CD8-positive, alpha-beta T cell (primary cell): ENCODE measurements at regions of chr17 and their contacts with region 1.

Region 1: DNA sequence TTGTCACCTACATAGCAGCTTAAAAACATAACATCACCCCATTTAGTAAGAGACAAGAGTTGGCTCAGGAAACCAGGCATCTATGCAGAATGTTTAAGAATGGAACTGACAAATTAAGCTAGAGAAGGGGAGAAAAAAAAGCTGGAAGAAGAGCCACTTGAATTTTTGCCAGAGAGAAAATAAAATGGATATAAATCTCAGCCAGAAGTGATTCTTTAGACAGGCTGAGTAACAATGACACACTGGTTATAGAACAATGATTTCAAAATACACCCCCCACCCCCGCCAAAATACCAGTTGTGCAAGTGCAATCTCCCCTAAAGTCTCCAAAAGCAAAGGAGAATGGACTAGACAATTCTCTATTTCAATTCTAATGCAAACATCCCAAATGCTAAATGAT is 22.4 kb downstream of the LSM12 start:
- DNase-seq: no peak
- ATAC-seq: no peak
- H3K4me3 ChIP-seq: no peak overlapping the region
- H3K4me3 Mint-ChIP-seq: no peak overlapping the region
- H3K27ac ChIP-seq: no peak overlapping the region
- H3K27ac Mint-ChIP-seq: peak overlapping the region; percentile 30
- H3K4me1 ChIP-seq: no peaks in the 10 kb centered on the region
- H3K4me1 Mint-ChIP-seq: peaks cover 26% of the 10 kb centered on the region
- H3K27me3 ChIP-seq: no peaks in the 10 kb centered on the region
- H3K27me3 Mint-ChIP-seq: no peaks in the 10 kb centered on the region
- CTCF ChIP-seq: no peak

Region 2: DNA sequence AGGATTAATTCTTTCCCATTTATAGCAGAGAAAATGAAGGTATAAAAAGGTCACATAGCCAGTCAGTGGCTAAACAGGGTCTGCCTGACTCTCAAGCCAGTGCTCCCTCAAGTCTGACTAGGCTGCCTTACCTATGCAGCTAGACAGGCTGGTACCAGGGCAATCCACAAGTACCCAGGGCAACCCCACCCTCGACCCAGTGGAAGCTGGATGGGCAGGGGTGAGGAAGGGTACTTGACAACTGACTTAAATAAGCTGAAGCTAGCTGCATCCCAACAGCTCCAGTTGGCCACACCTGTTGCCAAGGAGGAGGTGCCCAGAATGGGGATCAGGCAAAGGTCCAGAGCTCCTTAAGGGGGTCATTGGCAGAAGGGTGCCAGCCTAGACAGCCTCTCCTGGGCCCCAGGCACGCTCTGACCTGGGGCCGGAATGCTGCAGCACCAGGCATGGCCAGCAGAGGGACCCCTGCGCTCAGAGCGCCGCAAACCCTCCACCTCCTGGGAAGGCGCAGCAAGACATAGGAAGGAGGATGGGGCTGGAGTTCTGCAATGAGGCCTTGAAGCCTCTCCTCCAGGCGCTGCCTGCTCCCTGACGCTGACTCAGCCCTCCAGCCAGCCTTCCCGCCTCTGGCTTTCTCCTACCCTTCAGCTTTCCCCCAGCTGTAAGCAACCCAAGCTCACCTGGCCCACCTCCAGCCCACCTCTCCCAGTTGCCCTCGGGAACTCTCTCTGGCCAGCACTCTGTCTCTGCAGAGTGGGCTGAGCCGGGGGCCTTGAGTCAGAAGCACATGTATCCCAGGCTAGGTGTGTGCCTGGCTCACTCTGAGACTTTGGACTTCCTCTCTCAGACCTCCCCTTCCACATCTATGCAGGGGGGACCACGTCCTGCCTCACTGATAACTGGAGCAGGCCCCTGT is 165.5 kb before region 1 on chr17:
- CTCF ChIA-PET with region 1: interaction called, 51 read pairs
- POLR2A ChIA-PET with region 1: no interaction called
- intact Hi-C with region 1: loop called in 1 of 2 experiments (anchors 1 kb)
- DNase-seq: peak; percentile 32 to 79 (median 69)
- ATAC-seq: peak; percentile 88
- H3K4me3 ChIP-seq: no peak overlapping the region
- H3K4me3 Mint-ChIP-seq: no peak overlapping the region
- H3K27ac ChIP-seq: no peak overlapping the region
- H3K27ac Mint-ChIP-seq: no peak overlapping the region
- H3K4me1 ChIP-seq: no peaks in the 10 kb centered on the region
- H3K4me1 Mint-ChIP-seq: peaks cover 2% of the 10 kb centered on the region
- H3K27me3 ChIP-seq: no peaks in the 10 kb centered on the region
- H3K27me3 Mint-ChIP-seq: no peaks in the 10 kb centered on the region
- CTCF ChIP-seq: peak; percentile 91

Region 3: GRCh38 chr17:43940630-43941029 is 103.4 kb before region 1 on chr17:
- CTCF ChIA-PET with region 1: interaction called, 67 read pairs
- POLR2A ChIA-PET with region 1: interaction called, 5 read pairs
- intact Hi-C with region 1: loop called in 1 of 2 experiments (anchors 1 kb)
- DNase-seq: peak in 2 of 9 experiments; percentile 24 to 32
- ATAC-seq: no peak
- H3K4me3 ChIP-seq: no peak overlapping the region
- H3K4me3 Mint-ChIP-seq: no peak overlapping the region
- H3K27ac ChIP-seq: no peak overlapping the region
- H3K27ac Mint-ChIP-seq: no peak overlapping the region
- H3K4me1 ChIP-seq: peaks cover 12% of the 10 kb centered on the region
- H3K4me1 Mint-ChIP-seq: peaks cover 14% of the 10 kb centered on the region
- H3K27me3 ChIP-seq: no peaks in the 10 kb centered on the region
- H3K27me3 Mint-ChIP-seq: peaks cover 4% of the 10 kb centered on the region
- CTCF ChIP-seq: no peak

Region 4: DNA sequence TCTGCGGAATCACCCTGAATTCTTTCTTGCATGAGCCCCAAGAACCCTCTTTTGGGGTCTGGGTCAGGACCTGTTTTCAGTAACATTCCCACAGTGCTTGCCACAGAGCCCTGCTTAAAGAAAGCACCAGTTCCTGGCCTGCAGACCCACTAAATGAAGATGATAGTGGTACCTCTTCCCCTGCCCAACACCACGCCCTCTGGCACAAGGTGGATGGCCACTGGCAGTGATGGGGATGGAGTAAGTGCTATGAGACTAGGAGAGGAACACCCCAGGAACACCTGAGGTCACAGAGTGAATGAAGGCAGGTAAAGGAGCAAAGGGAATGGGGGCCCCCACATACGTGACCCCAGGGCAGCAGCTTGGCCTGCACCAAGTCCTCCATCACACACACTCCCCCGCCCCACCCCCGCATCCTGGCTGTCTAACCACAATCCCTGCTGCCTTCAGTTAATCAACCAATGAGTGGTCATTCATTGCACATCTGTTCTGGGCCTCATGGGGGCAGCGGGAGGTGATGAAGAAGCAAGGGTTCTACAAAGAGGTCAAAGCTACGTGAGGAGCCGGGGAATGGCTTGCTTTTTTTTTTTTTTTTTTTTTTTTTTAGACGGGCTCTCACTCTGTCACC is 97.9 kb before region 1 on chr17:
- CTCF ChIA-PET with region 1: interaction called, 67 read pairs
- POLR2A ChIA-PET with region 1: interaction called, 5 read pairs
- intact Hi-C with region 1: loop called in 1 of 2 experiments (anchors 1 kb)
- DNase-seq: no peak
- ATAC-seq: no peak
- H3K4me3 ChIP-seq: no peak overlapping the region
- H3K4me3 Mint-ChIP-seq: no peak overlapping the region
- H3K27ac ChIP-seq: no peak overlapping the region
- H3K27ac Mint-ChIP-seq: no peak overlapping the region
- H3K4me1 ChIP-seq: no peaks in the 10 kb centered on the region
- H3K4me1 Mint-ChIP-seq: no peaks in the 10 kb centered on the region
- H3K27me3 ChIP-seq: peaks cover 0 to under 1% of the 10 kb centered on the region in 2 experiments
- H3K27me3 Mint-ChIP-seq: peaks cover 17% of the 10 kb centered on the region
- CTCF ChIP-seq: no peak

Region 5: DNA sequence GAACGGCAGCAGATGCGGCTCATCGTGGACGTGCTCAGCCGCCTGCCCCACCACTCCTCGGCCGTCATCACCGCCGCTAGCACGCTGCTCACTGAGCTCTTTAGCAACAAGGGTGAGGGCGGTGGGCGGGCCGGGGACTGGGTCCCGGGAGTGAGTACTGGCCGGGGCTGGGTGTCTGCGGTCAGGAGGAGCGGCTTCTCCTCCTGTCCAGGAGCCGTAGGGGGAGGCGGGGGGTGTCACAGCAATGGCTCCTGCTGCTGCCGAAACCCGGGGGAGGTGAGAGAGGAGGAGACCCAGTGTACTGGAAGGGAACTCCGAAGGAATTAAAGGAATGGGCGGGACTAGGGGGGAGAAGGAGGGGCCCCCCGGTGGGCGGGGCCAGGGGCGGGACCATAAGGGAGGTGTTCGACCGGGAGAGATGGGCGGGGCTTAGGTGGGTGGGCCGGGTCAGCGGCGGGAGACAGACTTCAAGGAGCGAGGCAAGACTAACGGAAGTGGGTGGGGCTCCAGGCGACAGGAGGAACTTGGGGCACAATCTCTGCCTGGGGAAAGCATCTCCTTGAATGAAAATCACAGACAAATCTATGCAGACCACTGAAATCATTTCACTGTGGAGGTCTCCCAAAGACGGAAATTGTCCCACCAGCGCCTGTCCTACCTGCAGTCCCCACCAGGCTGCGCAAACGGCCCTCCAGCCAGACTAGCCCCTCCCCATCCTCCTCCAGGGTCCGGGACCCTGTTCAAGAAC is 37.3 kb before region 1 on chr17:
- CTCF ChIA-PET with region 1: interaction called, 4 read pairs
- POLR2A ChIA-PET with region 1: no interaction called
- intact Hi-C with region 1: loop called in 1 of 2 experiments (anchors 2 kb)
- DNase-seq: peak; percentile 91 to 99 (median 97)
- ATAC-seq: peak; percentile 88
- H3K4me3 ChIP-seq: peak overlapping the region; percentile 50 to 60
- H3K4me3 Mint-ChIP-seq: peak overlapping the region; percentile 88
- H3K27ac ChIP-seq: peak overlapping the region in 1 of 2 experiments; percentile 22
- H3K27ac Mint-ChIP-seq: no peak overlapping the region
- H3K4me1 ChIP-seq: peaks cover 30% of the 10 kb centered on the region
- H3K4me1 Mint-ChIP-seq: peaks cover 21% of the 10 kb centered on the region
- H3K27me3 ChIP-seq: peaks cover 0 to 17% of the 10 kb centered on the region in 2 experiments
- H3K27me3 Mint-ChIP-seq: peaks cover 5% of the 10 kb centered on the region
- CTCF ChIP-seq: no peak

Region 6: GRCh38 chr17:44070455-44071197 is 26.6 kb after region 1 on chr17 and contains the start of gene G6PC3:
- CTCF ChIA-PET with region 1: no interaction called
- POLR2A ChIA-PET with region 1: no interaction called
- intact Hi-C with region 1: no loop called
- DNase-seq: peak; percentile 30 to 88 (median 75)
- ATAC-seq: peak; percentile 55
- H3K4me3 ChIP-seq: peak within 1 kb of the TSS; percentile 70 to 84
- H3K4me3 Mint-ChIP-seq: peak within 1 kb of the TSS; percentile 96
- H3K27ac ChIP-seq: peak within 1 kb of the TSS; percentile 62 to 80
- H3K27ac Mint-ChIP-seq: peak within 1 kb of the TSS; percentile 94
- H3K4me1 ChIP-seq: peaks cover 23% of the 10 kb centered on the region
- H3K4me1 Mint-ChIP-seq: peaks cover 34% of the 10 kb centered on the region
- H3K27me3 ChIP-seq: no peaks in the 10 kb centered on the region
- H3K27me3 Mint-ChIP-seq: no peaks in the 10 kb centered on the region
- CTCF ChIP-seq: no peak
- total RNA-seq, gene G6PC3: 4.8 to 5.9 TPM